ENCODE measurements at regions of chr10 and their contacts with region 1.

Region 1: DNA sequence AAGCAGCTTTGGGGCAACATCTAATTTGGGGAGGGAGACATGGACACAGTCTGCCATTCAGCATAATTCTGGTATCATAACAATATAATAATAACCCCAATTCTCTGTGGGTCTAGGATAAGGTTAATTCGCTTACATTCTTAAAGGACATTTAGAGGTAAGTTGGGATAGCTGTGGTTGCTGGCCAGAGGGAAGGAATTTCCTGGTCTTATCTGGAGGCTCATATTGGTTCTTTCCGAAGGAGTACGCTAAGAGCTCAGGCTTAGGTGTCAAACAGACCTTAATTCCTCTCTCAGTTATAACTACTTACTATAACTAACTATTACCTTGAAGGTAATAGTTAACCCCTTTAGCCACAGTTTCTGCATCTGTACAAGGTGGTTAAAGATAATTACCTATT is 68.8 kb downstream of the SPAG6 start:
- DNase-seq: no peak
- H3K4me3 Mint-ChIP-seq: no peak overlapping the region
- H3K27ac Mint-ChIP-seq: no peak overlapping the region
- H3K4me1 Mint-ChIP-seq: no peaks in the 10 kb centered on the region
- H3K27me3 Mint-ChIP-seq: peaks cover 6% of the 10 kb centered on the region

Region 2: GRCh38 chr10:22351131-22351703 is 62.9 kb before region 1 on chr10:
- CTCF ChIA-PET with region 1: no interaction called
- intact Hi-C with region 1: loop called (anchors 5 kb)
- DNase-seq: no peak
- H3K4me3 Mint-ChIP-seq: no peak overlapping the region
- H3K27ac Mint-ChIP-seq: no peak overlapping the region
- H3K4me1 Mint-ChIP-seq: no peaks in the 10 kb centered on the region
- H3K27me3 Mint-ChIP-seq: peaks cover 19% of the 10 kb centered on the region

Region 3: DNA sequence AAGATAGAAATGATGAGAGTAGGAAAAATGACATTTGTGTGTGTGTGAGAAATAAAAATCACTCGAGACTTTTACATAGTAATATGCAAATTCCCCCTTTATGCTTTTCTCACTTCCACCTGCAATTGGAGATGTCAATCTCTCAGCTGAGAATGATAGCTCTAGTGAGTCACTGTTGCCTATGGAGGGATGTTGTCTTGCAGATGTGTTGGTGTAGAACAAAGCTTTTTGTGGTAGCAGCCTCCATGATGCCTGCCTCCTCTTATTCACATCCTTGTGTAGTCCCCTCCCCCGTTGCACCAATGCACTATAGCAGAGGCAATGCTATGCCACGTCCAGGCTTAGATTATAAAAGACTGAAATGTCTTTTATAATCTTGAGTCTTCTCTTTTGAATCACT is 35.1 kb before region 1 on chr10:
- CTCF ChIA-PET with region 1: no interaction called
- intact Hi-C with region 1: loop called (anchors 5 kb)
- DNase-seq: peak; percentile 75
- H3K4me3 Mint-ChIP-seq: no peak overlapping the region
- H3K27ac Mint-ChIP-seq: no peak overlapping the region
- H3K4me1 Mint-ChIP-seq: peaks cover 17% of the 10 kb centered on the region
- H3K27me3 Mint-ChIP-seq: peaks cover 3% of the 10 kb centered on the region

Measured in activated naive CD4-positive, alpha-beta T cell treated with anti-CD3 and anti-CD28 coated beads for 36 hours (primary cell).